B cell (primary cell): ENCODE measurements at regions of chr13 and their contacts with region 1.

Region 1: DNA sequence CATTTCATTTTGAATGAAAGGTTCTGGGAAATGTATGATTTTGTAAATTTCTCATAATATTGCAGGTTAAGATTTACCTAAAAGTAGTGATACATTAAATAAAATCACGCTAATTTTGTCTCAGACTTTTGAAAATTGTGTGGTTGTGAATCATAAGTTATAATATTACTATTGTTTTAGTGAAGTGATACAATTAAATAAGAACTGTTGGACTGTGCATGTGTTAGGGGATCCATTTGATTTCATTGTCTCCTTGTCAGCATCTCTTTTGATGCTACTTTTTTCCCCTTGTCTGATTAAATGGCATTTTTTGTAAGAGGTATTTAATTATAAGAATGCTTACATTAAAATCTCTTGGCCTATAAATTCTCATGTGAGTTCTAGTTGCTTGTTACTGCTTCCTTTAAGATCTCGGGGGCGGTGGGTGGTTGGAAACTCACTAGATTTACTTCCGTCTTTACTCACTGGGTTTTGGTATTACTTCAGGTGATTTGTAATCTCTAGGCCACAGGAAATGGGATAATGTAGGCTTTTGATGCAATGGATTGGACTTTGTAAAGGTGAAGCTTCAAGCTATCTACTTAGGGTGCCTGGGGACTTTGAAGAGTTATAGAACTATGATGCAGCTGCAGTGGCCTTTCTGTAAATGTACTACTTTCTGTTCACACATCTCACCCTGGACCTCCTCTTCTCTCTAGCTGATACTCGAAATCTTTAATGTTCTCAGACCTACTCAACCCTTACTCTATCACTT is 66.5 kb downstream of the PAN3 start:
- DNase-seq: no peak
- ATAC-seq: no peak
- H3K4me3 ChIP-seq: no peak overlapping the region
- H3K4me3 Mint-ChIP-seq: no peak overlapping the region
- H3K27ac ChIP-seq: no peak overlapping the region
- H3K27ac Mint-ChIP-seq: no peak overlapping the region
- H3K4me1 ChIP-seq: peaks cover 0 to 5% of the 10 kb centered on the region in 2 donors
- H3K4me1 Mint-ChIP-seq: peaks cover 14% of the 10 kb centered on the region
- H3K27me3 ChIP-seq: no peaks in the 10 kb centered on the region
- H3K27me3 Mint-ChIP-seq: no peaks in the 10 kb centered on the region
- CTCF ChIP-seq: no peak

Region 2: GRCh38 chr13:28185256-28185655 is 19.6 kb before region 1 on chr13:
- CTCF ChIA-PET with region 1: interaction called, 4 read pairs
- POLR2A ChIA-PET with region 1: interaction called, 10 read pairs
- intact Hi-C with region 1: no loop called
- DNase-seq: no peak
- ATAC-seq: no peak
- H3K4me3 ChIP-seq: no peak overlapping the region
- H3K4me3 Mint-ChIP-seq: no peak overlapping the region
- H3K27ac ChIP-seq: no peak overlapping the region
- H3K27ac Mint-ChIP-seq: no peak overlapping the region
- H3K4me1 ChIP-seq: no peaks in the 10 kb centered on the region
- H3K4me1 Mint-ChIP-seq: peaks cover 26% of the 10 kb centered on the region
- H3K27me3 ChIP-seq: no peaks in the 10 kb centered on the region
- H3K27me3 Mint-ChIP-seq: no peaks in the 10 kb centered on the region
- CTCF ChIP-seq: no peak

Region 3: DNA sequence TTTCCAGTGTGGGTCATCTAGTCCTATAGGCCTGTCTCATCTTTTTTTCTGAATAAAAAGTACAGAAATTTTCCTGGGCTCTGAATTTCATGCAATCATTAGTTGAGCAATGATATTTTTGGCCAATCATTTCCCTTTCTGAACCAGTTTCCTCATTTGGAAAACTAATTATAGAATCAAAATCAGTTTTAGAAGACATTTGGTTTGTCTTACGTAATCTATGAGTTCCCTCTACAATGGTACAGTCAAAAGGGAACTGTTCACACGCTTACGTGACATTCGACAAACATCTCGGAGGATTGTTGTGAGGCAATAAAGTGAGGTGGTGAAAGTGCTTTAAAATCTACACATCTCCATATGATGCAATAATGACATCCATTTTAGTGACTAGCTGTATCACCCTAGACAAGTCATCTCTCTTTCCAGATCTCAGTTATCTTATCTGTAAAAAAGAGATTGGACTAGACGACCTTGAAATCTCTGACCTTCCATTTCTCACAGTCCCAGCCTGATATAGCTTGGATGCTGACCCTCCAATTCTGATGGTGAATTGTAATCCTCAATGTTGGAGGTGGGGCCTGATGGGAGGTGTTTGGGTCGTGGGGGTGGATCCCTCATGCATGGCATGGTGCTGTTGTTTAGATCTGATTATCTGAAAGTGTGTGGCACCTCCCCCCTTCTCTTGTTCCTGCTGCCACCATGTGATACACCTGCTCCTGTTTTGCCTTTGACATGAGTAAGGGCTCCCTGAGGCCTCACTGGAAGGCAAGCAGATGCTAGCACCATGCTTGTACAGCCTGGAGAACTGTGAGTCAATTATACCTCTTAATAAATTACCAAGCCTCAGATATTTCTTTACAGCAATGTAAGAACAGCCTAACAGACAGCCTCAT is 263.4 kb after region 1 on chr13:
- CTCF ChIA-PET with region 1: no interaction called
- POLR2A ChIA-PET with region 1: no interaction called
- intact Hi-C with region 1: no loop called
- DNase-seq: no peak
- ATAC-seq: no peak
- H3K4me3 ChIP-seq: no peak overlapping the region
- H3K4me3 Mint-ChIP-seq: no peak overlapping the region
- H3K27ac ChIP-seq: no peak overlapping the region
- H3K27ac Mint-ChIP-seq: no peak overlapping the region
- H3K4me1 ChIP-seq: no peaks in the 10 kb centered on the region
- H3K4me1 Mint-ChIP-seq: peaks cover 2% of the 10 kb centered on the region
- H3K27me3 ChIP-seq: peaks cover 0 to 3% (median 0%) of the 10 kb centered on the region in 4 experiments
- H3K27me3 Mint-ChIP-seq: peaks cover 8% of the 10 kb centered on the region
- CTCF ChIP-seq: no peak